ENCODE measurements at regions of chr3 and their contacts with region 1.

Region 1: GRCh38 chr3:185770109-185770508 is 54.7 kb downstream of the IGF2BP2 start:
- DNase-seq: no peak
- H3K4me3 ChIP-seq: no peak overlapping the region
- CTCF ChIP-seq: no peak

Region 2: DNA sequence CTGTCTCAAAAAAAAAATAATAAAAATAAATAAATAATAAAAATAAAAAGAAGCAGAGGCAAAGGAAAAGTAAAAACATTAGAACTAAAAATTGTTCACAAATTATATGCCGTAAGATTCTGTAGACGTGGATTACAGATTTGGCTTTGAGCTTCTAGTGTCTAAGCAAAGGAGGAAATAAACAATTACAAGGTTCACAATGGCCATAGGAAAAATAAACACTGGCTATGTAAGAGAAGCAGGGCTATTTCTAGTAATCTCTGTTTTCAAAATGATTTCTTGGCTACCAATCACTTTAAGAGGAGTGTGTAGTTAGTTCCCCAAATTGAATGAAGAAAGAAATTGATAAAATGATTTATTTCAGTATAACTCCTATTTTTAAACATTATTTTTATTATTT is 325.8 kb before region 1 on chr3:
- CTCF ChIA-PET with region 1: no interaction called
- POLR2A ChIA-PET with region 1: no interaction called
- DNase-seq: no peak
- H3K4me3 ChIP-seq: no peak overlapping the region
- CTCF ChIP-seq: no peak

Region 3: GRCh38 chr3:185645596-185646381 is 124.3 kb before region 1 on chr3:
- CTCF ChIA-PET with region 1: no interaction called
- POLR2A ChIA-PET with region 1: no interaction called
- DNase-seq: no peak
- H3K4me3 ChIP-seq: no peak overlapping the region
- CTCF ChIP-seq: no peak

Region 4: GRCh38 chr3:185744997-185745843 is 24.9 kb before region 1 on chr3:
- CTCF ChIA-PET with region 1: interaction called, 20 read pairs
- POLR2A ChIA-PET with region 1: no interaction called
- DNase-seq: peak; percentile 74
- H3K4me3 ChIP-seq: no peak overlapping the region
- CTCF ChIP-seq: no peak

Region 5: GRCh38 chr3:185781759-185782158 is 11.7 kb after region 1 on chr3:
- CTCF ChIA-PET with region 1: interaction called, 146 read pairs
- POLR2A ChIA-PET with region 1: no interaction called
- DNase-seq: peak; percentile 62
- H3K4me3 ChIP-seq: no peak overlapping the region
- CTCF ChIP-seq: no peak

Region 6: DNA sequence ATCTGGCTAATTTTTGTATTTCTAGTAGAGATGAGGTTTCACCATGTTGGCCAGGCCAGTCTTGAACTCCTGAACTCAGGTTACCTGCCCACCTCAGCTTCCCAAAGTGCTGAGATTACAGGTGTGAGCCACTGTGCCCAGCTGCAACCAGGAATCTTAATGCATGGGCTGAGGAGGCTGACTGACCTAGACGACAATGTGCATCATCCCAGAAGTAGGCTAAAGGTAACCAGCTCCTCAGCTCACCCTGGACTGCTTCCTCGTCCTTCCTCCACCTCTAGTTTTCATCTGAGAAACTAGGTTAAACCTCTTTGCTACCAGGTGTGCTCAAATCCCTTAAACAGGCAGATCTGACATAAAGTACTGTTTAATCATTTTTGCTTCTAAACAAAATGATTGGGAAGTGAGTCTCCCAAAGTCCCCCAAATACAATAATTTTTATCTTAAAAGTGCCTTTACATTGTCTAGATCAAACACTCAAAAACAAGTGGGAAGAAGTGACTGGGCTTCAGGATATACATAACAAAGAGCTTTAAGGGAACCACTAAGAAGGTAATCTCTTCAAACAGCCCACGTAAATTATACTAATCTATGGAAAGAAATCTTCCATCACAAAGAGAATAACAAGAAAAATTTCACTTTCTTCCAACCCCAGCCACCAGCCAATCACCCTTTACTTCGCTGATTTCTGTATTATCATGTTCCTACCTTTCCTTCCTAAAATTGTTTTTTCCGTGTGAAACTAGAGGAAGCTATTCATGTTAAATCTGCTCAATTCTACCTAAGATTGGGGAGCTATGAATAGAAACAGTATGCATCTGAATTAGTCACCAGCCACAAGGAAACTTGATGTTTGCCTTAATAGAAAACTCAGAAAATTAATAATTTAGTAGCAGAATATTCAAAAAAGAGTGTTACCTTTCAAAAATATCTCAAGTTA is 20.1 kb after region 1 on chr3:
- CTCF ChIA-PET with region 1: interaction called, 20 read pairs
- POLR2A ChIA-PET with region 1: no interaction called
- DNase-seq: no peak
- H3K4me3 ChIP-seq: no peak overlapping the region
- CTCF ChIP-seq: no peak

Region 7: GRCh38 chr3:185862920-185863319 is 92.8 kb after region 1 on chr3:
- CTCF ChIA-PET with region 1: no interaction called
- POLR2A ChIA-PET with region 1: no interaction called
- DNase-seq: no peak
- H3K4me3 ChIP-seq: no peak overlapping the region
- CTCF ChIP-seq: no peak